Activated B cell treated with CpG ODN at 0.5 μM for 24 hours (primary cell): ENCODE measurements at regions of chr10 and their contacts with region 1.

Region 1: GRCh38 chr10:45594276-45595106 is 78.1 kb downstream of the ZFAND4 start:
- DNase-seq: peak; percentile 91
- ATAC-seq: peak; percentile 88
- H3K4me3 Mint-ChIP-seq: peak overlapping the region; percentile 86
- H3K27ac Mint-ChIP-seq: peak overlapping the region; percentile 91
- H3K4me1 Mint-ChIP-seq: peaks cover 42% of the 10 kb centered on the region
- H3K27me3 Mint-ChIP-seq: no peaks in the 10 kb centered on the region
- CTCF ChIP-seq: no peak

Region 2: GRCh38 chr10:45135443-45136198 is 458.9 kb before region 1 on chr10:
- CTCF ChIA-PET with region 1: no interaction called
- POLR2A ChIA-PET with region 1: no interaction called
- intact Hi-C with region 1: no loop called
- DNase-seq: no peak
- ATAC-seq: no peak
- H3K4me3 Mint-ChIP-seq: no peak overlapping the region
- H3K27ac Mint-ChIP-seq: no peak overlapping the region
- H3K4me1 Mint-ChIP-seq: no peaks in the 10 kb centered on the region
- H3K27me3 Mint-ChIP-seq: peaks cover 2% of the 10 kb centered on the region
- CTCF ChIP-seq: no peak

Region 3: GRCh38 chr10:45249978-45250693 is 344.4 kb before region 1 on chr10:
- CTCF ChIA-PET with region 1: no interaction called
- POLR2A ChIA-PET with region 1: no interaction called
- intact Hi-C with region 1: loop called (anchors 1 kb)
- DNase-seq: peak; percentile 42
- ATAC-seq: peak; percentile 84
- H3K4me3 Mint-ChIP-seq: peak overlapping the region; percentile 85
- H3K27ac Mint-ChIP-seq: peak overlapping the region; percentile 91
- H3K4me1 Mint-ChIP-seq: peaks cover 26% of the 10 kb centered on the region
- H3K27me3 Mint-ChIP-seq: peaks cover 2% of the 10 kb centered on the region
- CTCF ChIP-seq: peak; percentile 81

Region 4: GRCh38 chr10:45308707-45309106 is 285.8 kb before region 1 on chr10:
- CTCF ChIA-PET with region 1: no interaction called
- POLR2A ChIA-PET with region 1: no interaction called
- intact Hi-C with region 1: no loop called
- DNase-seq: no peak
- ATAC-seq: peak; percentile 18
- H3K4me3 Mint-ChIP-seq: no peak overlapping the region
- H3K27ac Mint-ChIP-seq: no peak overlapping the region
- H3K4me1 Mint-ChIP-seq: peaks cover 3% of the 10 kb centered on the region
- H3K27me3 Mint-ChIP-seq: no peaks in the 10 kb centered on the region
- CTCF ChIP-seq: no peak

Region 5: DNA sequence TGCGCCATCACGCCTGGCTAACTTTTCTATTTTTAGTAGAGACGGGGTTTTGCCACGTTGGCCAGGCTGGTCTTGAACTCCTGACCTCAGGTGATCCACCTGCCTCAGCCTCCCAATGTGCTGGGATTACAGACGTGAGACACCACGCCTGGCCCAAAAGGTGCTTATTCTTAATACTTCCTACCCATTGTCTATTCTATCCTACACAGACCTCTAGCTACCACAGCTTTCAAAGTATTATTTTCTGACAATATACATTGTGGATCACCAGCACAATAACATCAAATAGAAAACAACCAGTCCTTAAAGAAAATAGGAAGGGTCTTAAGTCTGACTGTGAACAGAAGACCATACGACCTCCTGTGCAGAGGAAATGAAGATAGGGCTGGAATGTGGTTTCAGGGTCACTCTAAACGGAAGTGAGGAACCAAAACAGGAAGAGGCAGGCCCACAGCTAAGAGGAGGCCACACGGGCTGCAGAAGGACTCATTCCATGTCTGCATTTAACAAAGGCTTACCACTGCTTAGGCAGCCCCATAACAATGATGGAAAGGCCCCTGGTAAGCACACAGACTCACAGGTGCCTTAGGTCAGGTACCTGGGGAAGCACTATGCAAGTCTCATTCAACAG is 37.1 kb before region 1 on chr10:
- CTCF ChIA-PET with region 1: no interaction called
- POLR2A ChIA-PET with region 1: no interaction called
- intact Hi-C with region 1: loop called (anchors 5 kb)
- DNase-seq: no peak
- ATAC-seq: peak; percentile 76
- H3K4me3 Mint-ChIP-seq: peak overlapping the region; percentile 42
- H3K27ac Mint-ChIP-seq: peak overlapping the region; percentile 75
- H3K4me1 Mint-ChIP-seq: peaks cover 53% of the 10 kb centered on the region
- H3K27me3 Mint-ChIP-seq: no peaks in the 10 kb centered on the region
- CTCF ChIP-seq: no peak

Region 6: DNA sequence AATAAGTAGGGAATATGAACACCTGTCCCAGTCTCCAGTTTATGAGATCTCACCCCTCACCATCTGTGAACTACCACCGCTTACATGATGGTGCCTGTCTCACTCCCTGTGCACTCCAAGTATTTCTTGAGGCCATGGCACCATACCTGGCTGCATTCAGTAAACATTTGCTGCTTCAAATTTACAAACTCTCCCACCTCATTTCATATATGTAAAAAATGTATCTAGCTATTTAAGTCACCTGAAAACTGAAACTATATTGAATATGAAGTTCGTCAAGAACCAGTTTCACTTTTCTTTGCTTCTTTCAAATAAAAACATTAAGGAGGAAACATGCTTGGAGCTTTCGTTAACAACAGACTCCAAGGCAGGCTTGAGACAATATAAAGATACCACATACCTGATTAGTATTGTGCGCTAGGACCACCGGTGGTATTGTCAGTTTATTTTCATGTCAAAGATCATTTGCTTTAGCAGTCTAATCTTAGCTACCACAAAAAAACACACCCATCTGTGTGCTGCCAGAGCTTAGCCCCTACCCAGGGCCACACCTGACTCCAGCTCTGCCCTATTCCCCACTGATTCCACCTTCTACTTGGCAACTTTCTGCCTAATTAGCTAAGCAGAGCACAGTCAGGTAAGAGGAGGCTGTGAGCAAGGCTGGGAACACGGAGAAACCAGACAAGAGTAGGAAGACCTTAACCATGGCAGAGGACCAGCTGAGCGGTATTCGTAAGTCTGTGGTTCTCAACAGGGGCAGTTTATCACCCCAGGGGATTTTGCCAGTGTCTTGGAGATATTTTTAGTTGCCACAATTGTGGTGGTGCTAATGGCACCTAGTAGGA is 13.9 kb before region 1 on chr10:
- CTCF ChIA-PET with region 1: no interaction called
- POLR2A ChIA-PET with region 1: interaction called, 24 read pairs
- intact Hi-C with region 1: loop called (anchors 1 kb)
- DNase-seq: peak; percentile 20
- ATAC-seq: peak; percentile 82
- H3K4me3 Mint-ChIP-seq: peak overlapping the region; percentile 89
- H3K27ac Mint-ChIP-seq: peak overlapping the region; percentile 97
- H3K4me1 Mint-ChIP-seq: peaks cover 33% of the 10 kb centered on the region
- H3K27me3 Mint-ChIP-seq: no peaks in the 10 kb centered on the region
- CTCF ChIP-seq: no peak